ENCODE measurements at regions of chr6 and their contacts with region 1.

Region 1: GRCh38 chr6:16519265-16520242 is 241.7 kb downstream of the ATXN1 start:
- DNase-seq: no peak
- H3K4me3 ChIP-seq: no peak overlapping the region
- H3K27ac ChIP-seq: no peak overlapping the region
- H3K4me1 ChIP-seq: no peaks in the 10 kb centered on the region
- CTCF ChIP-seq: no peak

Region 2: GRCh38 chr6:16591396-16592222 is 72.1 kb after region 1 on chr6:
- CTCF ChIA-PET with region 1: no interaction called
- POLR2A ChIA-PET with region 1: interaction called, 3 read pairs
- intact Hi-C with region 1: loop called (anchors 2 kb)
- DNase-seq: peak; percentile 10
- H3K4me3 ChIP-seq: no peak overlapping the region
- H3K27ac ChIP-seq: no peak overlapping the region
- H3K4me1 ChIP-seq: no peaks in the 10 kb centered on the region
- CTCF ChIP-seq: no peak

Region 3: DNA sequence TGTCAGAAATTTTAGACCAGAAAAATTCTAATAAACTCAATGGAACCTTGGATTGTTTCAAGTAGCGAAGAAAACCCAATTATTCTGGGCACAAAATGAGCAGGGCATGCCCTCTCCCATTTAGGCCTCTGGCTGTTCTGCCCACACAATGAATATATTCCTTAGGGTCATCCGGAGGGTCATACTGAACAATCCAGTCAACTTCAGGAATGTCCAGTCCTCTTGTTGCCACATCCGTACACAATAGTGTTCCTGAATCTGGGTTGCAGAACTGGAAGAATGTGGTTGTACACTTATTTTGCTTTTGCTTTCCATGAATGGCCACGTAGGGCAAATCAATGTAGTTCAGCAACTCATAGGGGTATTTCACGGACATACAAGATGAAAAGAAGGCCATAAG is 1844.2 kb after region 1 on chr6:
- CTCF ChIA-PET with region 1: no interaction called
- POLR2A ChIA-PET with region 1: no interaction called
- intact Hi-C with region 1: no loop called
- DNase-seq: no peak
- H3K4me3 ChIP-seq: no peak overlapping the region
- H3K27ac ChIP-seq: no peak overlapping the region
- H3K4me1 ChIP-seq: peaks cover 50% of the 10 kb centered on the region
- CTCF ChIP-seq: no peak